ENCODE measurements at regions of chr3 and their contacts with region 1.

Region 1: GRCh38 chr3:128497387-128498126 is 4.6 kb upstream of the GATA2 start:
- DNase-seq: peak; percentile 48 to 81 (median 59)
- ATAC-seq: peak; percentile 76
- H3K4me3 ChIP-seq: peak overlapping the region; percentile 52
- H3K4me3 Mint-ChIP-seq: peak overlapping the region; percentile 84
- H3K27ac ChIP-seq: no peak overlapping the region
- H3K27ac Mint-ChIP-seq: no peak overlapping the region
- H3K4me1 ChIP-seq: peaks cover 19% of the 10 kb centered on the region
- H3K4me1 Mint-ChIP-seq: peaks cover 10% of the 10 kb centered on the region
- H3K27me3 ChIP-seq: peaks cover 43 to 61% of the 10 kb centered on the region in 2 experiments
- H3K27me3 Mint-ChIP-seq: peaks cover 78% of the 10 kb centered on the region
- CTCF ChIP-seq: peak; percentile 38

Region 2: DNA sequence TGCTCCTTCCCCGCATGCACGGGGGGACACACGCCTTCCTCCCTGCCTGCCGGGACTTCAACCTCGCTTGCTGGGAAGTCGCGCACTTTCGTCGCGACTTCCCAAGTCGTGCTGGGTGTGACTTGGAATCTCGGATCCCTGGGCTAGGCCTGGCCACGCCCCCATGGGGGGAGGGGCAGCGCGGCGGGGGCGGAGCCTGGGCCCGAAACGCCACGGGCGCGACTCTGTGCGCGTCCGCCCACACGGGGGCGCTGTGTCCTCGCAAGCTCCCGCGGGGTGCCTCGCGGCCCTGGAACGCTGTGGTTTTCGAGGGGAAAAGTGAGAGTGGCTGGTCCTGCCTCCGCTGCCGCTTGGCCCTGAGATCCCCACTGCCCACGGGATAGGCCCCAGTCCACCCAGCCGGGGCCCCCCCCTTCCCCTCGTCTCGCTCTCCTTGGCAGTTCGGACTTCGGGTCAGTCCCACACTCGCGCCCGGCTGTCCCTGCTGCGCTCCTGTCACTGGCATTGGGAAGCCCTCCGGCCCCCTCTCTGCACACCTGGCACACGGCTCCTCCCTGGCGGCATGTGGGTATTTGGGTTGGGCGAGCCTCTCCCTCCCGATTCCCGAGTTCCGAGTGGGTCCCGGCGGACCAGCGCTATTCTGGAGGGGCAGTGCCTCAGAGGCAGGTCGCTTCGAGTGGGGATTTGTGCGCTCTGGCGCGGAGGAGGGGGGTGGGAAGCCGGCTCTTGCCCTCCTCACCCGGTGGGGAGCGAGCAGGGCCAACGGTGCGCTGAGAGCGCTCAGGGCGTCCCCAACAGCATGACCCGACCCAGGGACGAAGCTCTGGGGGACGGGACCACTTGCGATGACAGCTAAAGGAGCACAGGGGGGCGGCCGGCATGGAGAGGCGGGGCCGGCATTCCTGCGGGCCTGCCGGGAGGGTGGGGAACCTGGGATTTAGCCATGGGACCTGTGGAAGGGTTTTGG is 421.8 kb before region 1 on chr3:
- CTCF ChIA-PET with region 1: no interaction called
- POLR2A ChIA-PET with region 1: no interaction called
- intact Hi-C with region 1: loop called (anchors 2 to 5 kb)
- DNase-seq: peak; percentile 74 to 93 (median 83)
- ATAC-seq: peak; percentile 89
- H3K4me3 ChIP-seq: peak overlapping the region; percentile 66
- H3K4me3 Mint-ChIP-seq: peak overlapping the region; percentile 77
- H3K27ac ChIP-seq: no peak overlapping the region
- H3K27ac Mint-ChIP-seq: no peak overlapping the region
- H3K4me1 ChIP-seq: peaks cover 23% of the 10 kb centered on the region
- H3K4me1 Mint-ChIP-seq: peaks cover 5% of the 10 kb centered on the region
- H3K27me3 ChIP-seq: peaks cover 8 to 10% of the 10 kb centered on the region in 2 experiments
- H3K27me3 Mint-ChIP-seq: no peaks in the 10 kb centered on the region
- CTCF ChIP-seq: peak; percentile 87

Region 3: DNA sequence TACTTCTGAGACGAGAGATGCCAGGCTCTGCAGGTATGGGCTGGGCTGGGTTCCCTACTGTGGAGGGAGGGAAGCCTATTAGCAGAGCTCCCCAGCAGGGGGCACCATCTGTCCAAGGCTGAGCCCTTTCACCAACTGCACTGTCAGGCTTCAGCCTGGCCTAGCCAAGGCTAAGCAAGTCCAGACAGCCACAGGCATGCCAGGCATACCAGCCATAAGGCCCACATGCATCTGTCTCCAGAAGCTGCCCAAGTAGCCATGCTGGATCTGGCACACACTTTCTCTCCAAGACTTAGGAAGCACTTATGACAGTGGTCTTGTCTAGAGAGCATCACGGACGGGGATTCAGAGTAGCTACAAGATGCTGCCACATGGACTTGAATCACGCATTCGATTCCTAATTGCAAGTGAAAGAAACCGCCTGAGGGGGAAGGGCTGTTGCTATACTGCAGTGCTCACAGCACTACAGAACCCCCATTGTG is 402.3 kb before region 1 on chr3:
- CTCF ChIA-PET with region 1: no interaction called
- POLR2A ChIA-PET with region 1: no interaction called
- intact Hi-C with region 1: loop called (anchors 1 kb)
- DNase-seq: peak; percentile 69 to 87 (median 78)
- ATAC-seq: peak; percentile 100
- H3K4me3 ChIP-seq: no peak overlapping the region
- H3K4me3 Mint-ChIP-seq: no peak overlapping the region
- H3K27ac ChIP-seq: no peak overlapping the region
- H3K27ac Mint-ChIP-seq: no peak overlapping the region
- H3K4me1 ChIP-seq: no peaks in the 10 kb centered on the region
- H3K4me1 Mint-ChIP-seq: peaks cover 7% of the 10 kb centered on the region
- H3K27me3 ChIP-seq: no peaks in the 10 kb centered on the region
- H3K27me3 Mint-ChIP-seq: no peaks in the 10 kb centered on the region
- CTCF ChIP-seq: peak; percentile 87

Region 4: DNA sequence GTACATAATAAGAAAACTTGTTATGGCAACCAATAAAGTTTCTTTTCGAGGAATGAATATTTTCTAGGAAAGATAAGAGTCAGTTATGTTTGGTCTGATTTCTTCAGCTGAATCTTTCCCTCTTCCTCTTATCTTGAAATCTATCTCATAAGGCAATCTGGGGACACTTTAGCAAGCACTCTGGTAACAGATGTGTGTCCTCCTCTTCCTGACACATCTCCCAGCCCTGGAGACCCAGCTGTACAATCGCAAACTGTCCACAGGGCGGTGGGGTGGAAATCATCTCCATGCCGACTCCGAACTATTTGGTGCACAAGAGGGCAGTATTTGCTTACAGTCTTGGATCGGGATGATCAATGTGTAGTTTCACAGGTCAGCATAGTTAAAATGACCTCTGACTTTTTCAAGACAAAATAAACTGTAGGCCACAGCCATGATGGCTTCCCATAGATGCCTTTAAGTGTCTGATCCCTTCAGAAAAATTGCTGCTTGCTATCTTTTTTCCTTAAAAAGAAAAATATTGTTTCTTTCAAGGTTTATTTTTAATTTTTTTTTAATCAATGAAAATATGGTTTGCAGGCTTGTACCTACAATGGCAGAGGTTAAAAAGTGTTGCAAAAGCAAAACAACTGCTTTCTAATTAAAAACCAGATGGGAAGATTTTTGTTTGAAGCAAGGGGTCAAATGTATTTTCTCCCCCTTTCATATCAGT is 326.6 kb before region 1 on chr3:
- CTCF ChIA-PET with region 1: no interaction called
- POLR2A ChIA-PET with region 1: no interaction called
- intact Hi-C with region 1: loop called in 1 of 2 experiments (anchors 10 kb)
- DNase-seq: peak in 3 of 14 experiments; percentile 13 to 40 (median 35)
- ATAC-seq: no peak
- H3K4me3 ChIP-seq: no peak overlapping the region
- H3K4me3 Mint-ChIP-seq: no peak overlapping the region
- H3K27ac ChIP-seq: no peak overlapping the region
- H3K27ac Mint-ChIP-seq: no peak overlapping the region
- H3K4me1 ChIP-seq: peaks cover 14% of the 10 kb centered on the region
- H3K4me1 Mint-ChIP-seq: peaks cover 41% of the 10 kb centered on the region
- H3K27me3 ChIP-seq: no peaks in the 10 kb centered on the region
- H3K27me3 Mint-ChIP-seq: no peaks in the 10 kb centered on the region
- CTCF ChIP-seq: peak; percentile 24

Region 5: GRCh38 chr3:128307029-128307633 is 190.4 kb before region 1 on chr3:
- CTCF ChIA-PET with region 1: no interaction called
- POLR2A ChIA-PET with region 1: no interaction called
- intact Hi-C with region 1: loop called in 1 of 2 experiments (anchors 5 kb)
- DNase-seq: peak in 3 of 14 experiments; percentile 28 to 44 (median 41)
- ATAC-seq: no peak
- H3K4me3 ChIP-seq: no peak overlapping the region
- H3K4me3 Mint-ChIP-seq: no peak overlapping the region
- H3K27ac ChIP-seq: no peak overlapping the region
- H3K27ac Mint-ChIP-seq: no peak overlapping the region
- H3K4me1 ChIP-seq: peaks cover 14% of the 10 kb centered on the region
- H3K4me1 Mint-ChIP-seq: peaks cover 39% of the 10 kb centered on the region
- H3K27me3 ChIP-seq: no peaks in the 10 kb centered on the region
- H3K27me3 Mint-ChIP-seq: no peaks in the 10 kb centered on the region
- CTCF ChIP-seq: no peak

Region 6: GRCh38 chr3:128426128-128426921 is 71.2 kb before region 1 on chr3:
- CTCF ChIA-PET with region 1: interaction called, 12 read pairs
- POLR2A ChIA-PET with region 1: no interaction called
- intact Hi-C with region 1: loop called (anchors 1 kb)
- DNase-seq: peak; percentile 19 to 80 (median 46)
- ATAC-seq: peak; percentile 96
- H3K4me3 ChIP-seq: peak overlapping the region; percentile 25
- H3K4me3 Mint-ChIP-seq: no peak overlapping the region
- H3K27ac ChIP-seq: no peak overlapping the region
- H3K27ac Mint-ChIP-seq: no peak overlapping the region
- H3K4me1 ChIP-seq: peaks cover 9% of the 10 kb centered on the region
- H3K4me1 Mint-ChIP-seq: no peaks in the 10 kb centered on the region
- H3K27me3 ChIP-seq: peaks cover 7 to 18% of the 10 kb centered on the region in 2 experiments
- H3K27me3 Mint-ChIP-seq: peaks cover 32% of the 10 kb centered on the region
- CTCF ChIP-seq: peak; percentile 66

Region 7: DNA sequence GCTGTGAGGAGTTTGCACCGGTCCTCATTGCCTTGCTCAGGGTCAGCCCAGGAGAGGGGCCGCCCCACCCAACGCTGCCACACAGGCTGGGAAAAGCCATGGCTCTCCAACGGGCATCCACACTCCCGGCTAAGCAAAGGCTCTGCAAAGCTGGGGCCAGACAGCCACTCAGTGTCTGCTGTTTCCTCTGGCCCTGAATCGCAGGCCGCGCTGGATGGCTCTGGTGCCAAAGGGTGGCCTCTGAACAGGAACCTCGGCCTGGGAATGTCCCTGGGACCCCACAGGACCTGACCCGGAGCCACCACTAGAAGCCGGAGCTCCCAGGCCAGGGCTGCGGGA is 110.1 kb after region 1 on chr3:
- CTCF ChIA-PET with region 1: interaction called, 4 read pairs
- POLR2A ChIA-PET with region 1: no interaction called
- intact Hi-C with region 1: loop called (anchors 5 to 10 kb)
- DNase-seq: no peak
- ATAC-seq: no peak
- H3K4me3 ChIP-seq: peak overlapping the region; percentile 62
- H3K4me3 Mint-ChIP-seq: no peak overlapping the region
- H3K27ac ChIP-seq: no peak overlapping the region
- H3K27ac Mint-ChIP-seq: no peak overlapping the region
- H3K4me1 ChIP-seq: peaks cover 12% of the 10 kb centered on the region
- H3K4me1 Mint-ChIP-seq: no peaks in the 10 kb centered on the region
- H3K27me3 ChIP-seq: peaks cover 5 to 10% of the 10 kb centered on the region in 2 experiments
- H3K27me3 Mint-ChIP-seq: no peaks in the 10 kb centered on the region
- CTCF ChIP-seq: no peak